ENCODE measurements at regions of chr5 and their contacts with region 1.

Region 1: DNA sequence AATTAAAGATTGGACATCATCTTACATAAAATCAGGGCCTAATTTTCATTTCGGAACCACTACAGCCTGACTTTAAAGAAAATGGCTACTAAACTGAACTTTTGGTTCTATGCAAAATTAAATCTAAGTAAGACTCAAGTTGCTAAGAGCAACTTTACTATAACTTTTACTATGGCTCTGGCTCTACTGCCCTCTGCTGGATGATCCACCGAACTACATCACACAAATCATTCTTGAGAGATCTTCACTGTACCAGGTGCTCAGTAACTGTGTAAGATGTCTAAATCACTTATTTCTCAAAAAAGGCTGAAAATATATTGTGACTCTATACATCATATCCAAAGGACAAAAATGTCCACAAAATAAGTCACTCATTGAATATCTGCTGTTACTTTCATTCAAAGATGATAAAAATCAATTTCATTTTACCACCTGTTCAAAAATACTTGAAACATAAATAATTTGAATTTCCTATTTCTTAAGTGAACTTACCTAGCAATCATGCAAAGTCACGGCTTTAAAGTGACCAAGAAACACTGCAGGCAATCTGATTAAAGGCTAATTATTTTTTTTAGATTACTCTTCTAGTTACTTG is 13.5 kb downstream of the MOCS2 start:
- DNase-seq: peak; percentile 89
- H3K4me3 Mint-ChIP-seq: no peak overlapping the region
- H3K27ac Mint-ChIP-seq: no peak overlapping the region
- H3K4me1 Mint-ChIP-seq: peaks cover 4% of the 10 kb centered on the region
- H3K27me3 Mint-ChIP-seq: no peaks in the 10 kb centered on the region

Region 2: DNA sequence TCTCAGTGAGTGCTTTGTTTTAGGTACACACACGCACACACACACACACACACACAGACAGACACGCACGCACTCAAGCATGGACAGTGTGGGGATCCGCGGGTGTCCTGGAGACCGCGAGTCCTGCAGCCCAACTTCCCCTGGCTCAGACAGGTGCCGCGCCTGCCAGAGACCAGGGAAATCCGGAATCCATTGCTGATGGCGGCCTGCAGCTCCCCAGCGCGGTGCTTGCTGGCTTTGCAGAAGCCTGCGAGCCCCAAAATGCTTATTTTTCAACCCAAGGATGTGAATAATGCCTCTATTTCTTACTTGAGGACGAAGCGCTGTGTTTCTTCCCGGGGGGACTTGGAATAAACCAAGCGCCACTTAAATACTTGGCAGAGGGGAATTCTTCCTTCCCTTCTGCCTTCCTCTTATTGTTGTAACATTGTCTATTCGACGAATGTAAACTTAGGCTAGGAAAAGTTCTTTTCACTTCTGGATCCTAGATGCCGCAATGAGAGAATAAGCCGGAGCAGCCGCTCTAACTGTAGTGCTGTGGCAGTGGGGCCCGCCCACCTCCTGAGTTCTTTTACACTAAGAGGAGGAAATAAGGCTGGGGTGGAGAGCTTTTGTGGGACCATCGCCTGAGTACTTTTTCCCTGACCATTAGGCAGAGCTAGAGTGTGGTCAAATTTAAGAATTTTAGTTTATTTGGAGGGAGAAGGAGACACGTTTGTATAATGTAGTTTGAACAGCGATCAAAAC is 106.1 kb before region 1 on chr5:
- CTCF ChIA-PET with region 1: interaction called, 6 read pairs
- intact Hi-C with region 1: loop called (anchors 1 kb)
- DNase-seq: peak; percentile 73
- H3K4me3 Mint-ChIP-seq: peak overlapping the region; percentile 79
- H3K27ac Mint-ChIP-seq: peak overlapping the region; percentile 50
- H3K4me1 Mint-ChIP-seq: peaks cover 21% of the 10 kb centered on the region
- H3K27me3 Mint-ChIP-seq: peaks cover 4% of the 10 kb centered on the region

Measured in activated naive CD4-positive, alpha-beta T cell treated with anti-CD3 and anti-CD28 coated beads for 36 hours (primary cell).